GM12878 (cell line): ENCODE measurements at regions of chr11 and their contacts with region 1.

Region 1: GRCh38 chr11:117817368-117818040 is 7.0 kb downstream of the FXYD2 start:
- DNase-seq: peak; percentile 93
- ATAC-seq: peak; percentile 47
- H3K4me3 ChIP-seq: no peak overlapping the region
- H3K27ac ChIP-seq: peak overlapping the region; percentile 87
- H3K4me1 ChIP-seq: peaks cover 55% of the 10 kb centered on the region
- H3K27me3 ChIP-seq: no peaks in the 10 kb centered on the region
- CTCF ChIP-seq: peak; percentile 98 to 100 (median 99)
- EP300 ChIP-seq: no peak; a peak in 1 of 4 replicates
- POLR2A ChIP-seq: peak; percentile 4; the same call in 1 of the 2 replicates
- RAD21 ChIP-seq: peak; percentile 95

Region 2: GRCh38 chr11:115919341-115920091 is 1898.0 kb before region 1 on chr11:
- CTCF ChIA-PET with region 1: no interaction called
- POLR2A ChIA-PET with region 1: no interaction called
- RAD21 ChIA-PET with region 1: no interaction called
- SMC1A ChIA-PET with region 1: no interaction called
- in situ Hi-C with region 1: no loop called
- intact Hi-C with region 1: loop called (anchors 10 kb)
- DNase-seq: peak; percentile 91
- ATAC-seq: peak; percentile 66
- H3K4me3 ChIP-seq: peak overlapping the region; percentile 15; the same call in 1 of the 2 replicates
- H3K27ac ChIP-seq: peak overlapping the region; percentile 94
- H3K4me1 ChIP-seq: peaks cover 70% of the 10 kb centered on the region
- H3K27me3 ChIP-seq: no peaks in the 10 kb centered on the region
- CTCF ChIP-seq: no peak
- EP300 ChIP-seq: peak; percentile 92 to 93; a peak in 3 of 4 replicates
- POLR2A ChIP-seq: peak; percentile 70
- RAD21 ChIP-seq: peak; percentile 12; the same call in 1 of the 2 replicates

Region 3: GRCh38 chr11:117458275-117458674 is 359.2 kb before region 1 on chr11:
- CTCF ChIA-PET with region 1: interaction called, 6 read pairs
- POLR2A ChIA-PET with region 1: interaction called, 7 read pairs
- RAD21 ChIA-PET with region 1: interaction called, 9 read pairs
- SMC1A ChIA-PET with region 1: interaction called, 7 read pairs
- in situ Hi-C with region 1: no loop called
- intact Hi-C with region 1: loop called (anchors 1 kb)
- DNase-seq: no peak
- ATAC-seq: peak; percentile 70
- H3K4me3 ChIP-seq: peak overlapping the region; percentile 48; the same call in 1 of the 2 replicates
- H3K27ac ChIP-seq: peak overlapping the region; percentile 57
- H3K4me1 ChIP-seq: peaks cover 48% of the 10 kb centered on the region
- H3K27me3 ChIP-seq: no peaks in the 10 kb centered on the region
- CTCF ChIP-seq: no peak
- EP300 ChIP-seq: peak; percentile 58 to 81; a peak in 3 of 4 replicates
- POLR2A ChIP-seq: 0 out of 2 replicates have a peak, but pooled peaks have one; percentile 36
- RAD21 ChIP-seq: no peak

Region 4: GRCh38 chr11:117759305-117759704 is 58.2 kb before region 1 on chr11:
- CTCF ChIA-PET with region 1: no interaction called
- POLR2A ChIA-PET with region 1: no interaction called
- RAD21 ChIA-PET with region 1: no interaction called
- SMC1A ChIA-PET with region 1: no interaction called
- in situ Hi-C with region 1: no loop called
- intact Hi-C with region 1: no loop called
- DNase-seq: no peak
- ATAC-seq: no peak
- H3K4me3 ChIP-seq: no peak overlapping the region
- H3K27ac ChIP-seq: no peak overlapping the region
- H3K4me1 ChIP-seq: no peaks in the 10 kb centered on the region
- H3K27me3 ChIP-seq: peaks cover 2 to 4% of the 10 kb centered on the region in 2 experiments; a peak in 2 of 4 replicates
- CTCF ChIP-seq: no peak
- EP300 ChIP-seq: no peak
- POLR2A ChIP-seq: no peak
- RAD21 ChIP-seq: no peak

Region 5: GRCh38 chr11:117843666-117844484 is 26.4 kb after region 1 on chr11:
- CTCF ChIA-PET with region 1: interaction called, 24 read pairs
- POLR2A ChIA-PET with region 1: interaction called, 7 read pairs
- RAD21 ChIA-PET with region 1: interaction called, 9 read pairs
- SMC1A ChIA-PET with region 1: interaction called, 8 read pairs
- in situ Hi-C with region 1: no loop called
- intact Hi-C with region 1: no loop called
- DNase-seq: no peak
- ATAC-seq: peak; percentile 89
- H3K4me3 ChIP-seq: no peak overlapping the region
- H3K27ac ChIP-seq: no peak overlapping the region
- H3K4me1 ChIP-seq: no peaks in the 10 kb centered on the region; the same call in 1 of the 2 replicates
- H3K27me3 ChIP-seq: no peaks in the 10 kb centered on the region
- CTCF ChIP-seq: peak; percentile 94 to 98 (median 97)
- EP300 ChIP-seq: no peak
- POLR2A ChIP-seq: no peak
- RAD21 ChIP-seq: peak; percentile 87

Region 6: GRCh38 chr11:117985953-117986887 is 168.7 kb after region 1 on chr11 and contains the start of gene IL10RA:
- CTCF ChIA-PET with region 1: interaction called, 14 read pairs
- POLR2A ChIA-PET with region 1: interaction called, 4 read pairs
- RAD21 ChIA-PET with region 1: interaction called, 6 read pairs
- SMC1A ChIA-PET with region 1: interaction called, 5 read pairs
- in situ Hi-C with region 1: no loop called
- intact Hi-C with region 1: no loop called
- DNase-seq: no peak
- ATAC-seq: peak; percentile 87
- H3K4me3 ChIP-seq: peak within 1 kb of the TSS; percentile 79
- H3K27ac ChIP-seq: peak within 1 kb of the TSS; percentile 84
- H3K4me1 ChIP-seq: peaks cover 18% of the 10 kb centered on the region
- H3K27me3 ChIP-seq: no peaks in the 10 kb centered on the region
- CTCF ChIP-seq: peak in 2 of 3 experiments; percentile 10 to 15; a peak in 1 of 6 replicates
- EP300 ChIP-seq: 0 out of 4 replicates have a peak, but pooled peaks of 1 of the 2 experiments have one; percentile 26
- POLR2A ChIP-seq: peak; percentile 99
- RAD21 ChIP-seq: no peak
- polyA plus RNA-seq, gene IL10RA: 0.77 to 1.4 TPM

Region 7: GRCh38 chr11:118051611-118052461 is 234.3 kb after region 1 on chr11:
- CTCF ChIA-PET with region 1: interaction called, 257 read pairs
- POLR2A ChIA-PET with region 1: interaction called, 4 read pairs
- RAD21 ChIA-PET with region 1: interaction called, 183 read pairs
- SMC1A ChIA-PET with region 1: interaction called, 98 read pairs
- in situ Hi-C with region 1: no loop called
- intact Hi-C with region 1: no loop called
- DNase-seq: peak; percentile 23
- ATAC-seq: peak; percentile 81
- H3K4me3 ChIP-seq: no peak overlapping the region
- H3K27ac ChIP-seq: no peak overlapping the region
- H3K4me1 ChIP-seq: peaks cover 18% of the 10 kb centered on the region
- H3K27me3 ChIP-seq: no peaks in the 10 kb centered on the region
- CTCF ChIP-seq: no peak
- EP300 ChIP-seq: peak; percentile 14 to 42; a peak in 2 of 4 replicates
- POLR2A ChIP-seq: no peak
- RAD21 ChIP-seq: no peak

Region 8: DNA sequence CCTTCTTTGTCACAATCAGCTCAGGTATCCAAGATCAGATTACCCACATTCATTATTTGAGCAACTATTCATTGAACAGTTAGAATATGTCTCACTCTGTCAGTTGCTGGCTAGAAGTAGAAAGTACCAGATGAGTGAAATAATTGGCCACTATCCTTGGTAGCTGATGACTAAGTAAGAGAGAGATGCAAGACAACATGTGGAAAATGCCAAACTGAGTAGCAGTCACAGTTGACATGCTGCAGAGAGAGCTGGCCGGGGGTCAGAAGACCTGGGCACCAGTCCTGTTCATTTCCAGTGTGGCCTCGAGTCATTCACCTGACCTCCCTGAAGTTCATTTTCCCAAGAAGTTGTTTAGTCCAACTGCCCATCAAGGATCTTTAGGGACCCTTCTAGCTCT is 291.7 kb after region 1 on chr11:
- CTCF ChIA-PET with region 1: no interaction called
- POLR2A ChIA-PET with region 1: no interaction called
- RAD21 ChIA-PET with region 1: no interaction called
- SMC1A ChIA-PET with region 1: no interaction called
- in situ Hi-C with region 1: no loop called
- intact Hi-C with region 1: no loop called
- DNase-seq: no peak
- ATAC-seq: no peak
- H3K4me3 ChIP-seq: no peak overlapping the region
- H3K27ac ChIP-seq: no peak overlapping the region
- H3K4me1 ChIP-seq: no peaks in the 10 kb centered on the region
- H3K27me3 ChIP-seq: peaks cover 0 to 2% of the 10 kb centered on the region in 2 experiments; a peak in 1 of 4 replicates
- CTCF ChIP-seq: no peak
- EP300 ChIP-seq: no peak
- POLR2A ChIP-seq: no peak
- RAD21 ChIP-seq: no peak